ENCODE measurements at regions of chr7 and their contacts with region 1.

Region 1: GRCh38 chr7:584122-584465 is 64.4 kb upstream of the PDGFA start:
- DNase-seq: peak; percentile 69 to 95 (median 90)
- ATAC-seq: peak; percentile 98
- H3K4me3 ChIP-seq: peak overlapping the region; percentile 85
- H3K4me3 Mint-ChIP-seq: peak overlapping the region; percentile 85 to 96 (median 90)
- H3K27ac ChIP-seq: peak overlapping the region; percentile 78
- H3K27ac Mint-ChIP-seq: peak overlapping the region; percentile 93 to 98 (median 97)
- H3K4me1 ChIP-seq: peaks cover 15 to 17% of the 10 kb centered on the region in 2 donors
- H3K4me1 Mint-ChIP-seq: peaks cover 14 to 44% (median 35%) of the 10 kb centered on the region in 7 donors
- H3K27me3 ChIP-seq: no peaks in the 10 kb centered on the region
- H3K27me3 Mint-ChIP-seq: no peaks in the 10 kb centered on the region

Region 2: DNA sequence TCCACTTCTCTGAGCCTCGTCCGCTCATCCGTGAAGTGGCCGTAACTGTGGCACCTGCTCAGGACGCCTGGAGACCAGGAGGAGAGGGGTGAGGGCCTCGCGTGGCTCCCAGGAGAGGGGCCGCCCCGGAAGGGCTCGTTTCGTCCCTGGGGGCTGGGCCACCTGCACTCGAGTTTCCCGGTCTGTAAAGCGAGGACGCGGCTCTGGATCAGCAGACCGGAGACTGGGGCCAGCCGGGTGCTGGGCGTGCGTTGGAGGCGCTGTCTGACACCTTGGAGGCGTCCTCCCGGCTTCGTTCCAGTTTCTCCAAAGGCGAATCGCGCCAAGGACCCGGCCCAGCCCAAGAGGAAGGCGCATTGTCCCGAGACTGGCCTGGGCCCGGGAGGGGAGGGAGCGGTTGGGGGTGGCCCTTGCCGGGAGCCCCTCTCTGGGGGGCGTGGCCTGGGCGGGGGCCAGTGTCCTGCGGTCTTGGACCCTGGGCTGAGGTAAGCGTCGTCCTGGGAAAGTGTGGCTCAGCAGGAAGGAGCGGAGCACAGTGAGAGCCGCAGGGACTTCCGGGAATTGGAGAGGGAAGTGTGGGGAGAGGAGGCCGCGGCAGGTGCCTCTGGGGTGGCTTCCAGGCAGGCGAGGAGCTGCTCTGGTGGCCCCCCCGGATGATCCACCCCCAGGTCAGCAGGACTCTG is 204.5 kb before region 1 on chr7:
- CTCF ChIA-PET with region 1: no interaction called
- POLR2A ChIA-PET with region 1: no interaction called
- intact Hi-C with region 1: loop called in 1 of 2 experiments (anchors 1 kb)
- DNase-seq: peak in 3 of 9 donors; percentile 3 to 21 (median 10)
- ATAC-seq: no peak
- H3K4me3 ChIP-seq: peak overlapping the region; percentile 20
- H3K4me3 Mint-ChIP-seq: peak overlapping the region in 9 of 10 donors; percentile 18 to 84 (median 76)
- H3K27ac ChIP-seq: no peak overlapping the region
- H3K27ac Mint-ChIP-seq: peak overlapping the region in 3 of 9 donors; percentile 47 to 60 (median 55)
- H3K4me1 ChIP-seq: peaks cover 19 to 32% of the 10 kb centered on the region in 2 donors
- H3K4me1 Mint-ChIP-seq: peaks cover 17 to 37% (median 23%) of the 10 kb centered on the region in 7 donors
- H3K27me3 ChIP-seq: no peaks in the 10 kb centered on the region
- H3K27me3 Mint-ChIP-seq: peaks cover 0 to 28% (median 0%) of the 10 kb centered on the region in 5 donors

Region 3: GRCh38 chr7:604001-604883 is 20.1 kb after region 1 on chr7:
- CTCF ChIA-PET with region 1: no interaction called
- POLR2A ChIA-PET with region 1: interaction called, 9 read pairs
- intact Hi-C with region 1: loop called (anchors 1 kb)
- DNase-seq: peak; percentile 74 to 91 (median 87)
- ATAC-seq: peak; percentile 89
- H3K4me3 ChIP-seq: peak overlapping the region; percentile 26
- H3K4me3 Mint-ChIP-seq: peak overlapping the region; percentile 77 to 98 (median 88)
- H3K27ac ChIP-seq: peak overlapping the region; percentile 86
- H3K27ac Mint-ChIP-seq: peak overlapping the region; percentile 93 to 100 (median 99)
- H3K4me1 ChIP-seq: peaks cover 48 to 56% of the 10 kb centered on the region in 2 donors
- H3K4me1 Mint-ChIP-seq: peaks cover 37 to 72% (median 49%) of the 10 kb centered on the region in 7 donors
- H3K27me3 ChIP-seq: no peaks in the 10 kb centered on the region
- H3K27me3 Mint-ChIP-seq: no peaks in the 10 kb centered on the region

Region 4: GRCh38 chr7:641269-641671 is 57.2 kb after region 1 on chr7:
- CTCF ChIA-PET with region 1: no interaction called
- POLR2A ChIA-PET with region 1: no interaction called
- intact Hi-C with region 1: loop called in 1 of 2 experiments (anchors 2 kb)
- DNase-seq: no peak
- ATAC-seq: no peak
- H3K4me3 ChIP-seq: no peak overlapping the region
- H3K4me3 Mint-ChIP-seq: no peak overlapping the region
- H3K27ac ChIP-seq: no peak overlapping the region
- H3K27ac Mint-ChIP-seq: no peak overlapping the region
- H3K4me1 ChIP-seq: no peaks in the 10 kb centered on the region
- H3K4me1 Mint-ChIP-seq: peaks cover 9 to 33% (median 23%) of the 10 kb centered on the region in 7 donors
- H3K27me3 ChIP-seq: no peaks in the 10 kb centered on the region
- H3K27me3 Mint-ChIP-seq: no peaks in the 10 kb centered on the region

Region 5: DNA sequence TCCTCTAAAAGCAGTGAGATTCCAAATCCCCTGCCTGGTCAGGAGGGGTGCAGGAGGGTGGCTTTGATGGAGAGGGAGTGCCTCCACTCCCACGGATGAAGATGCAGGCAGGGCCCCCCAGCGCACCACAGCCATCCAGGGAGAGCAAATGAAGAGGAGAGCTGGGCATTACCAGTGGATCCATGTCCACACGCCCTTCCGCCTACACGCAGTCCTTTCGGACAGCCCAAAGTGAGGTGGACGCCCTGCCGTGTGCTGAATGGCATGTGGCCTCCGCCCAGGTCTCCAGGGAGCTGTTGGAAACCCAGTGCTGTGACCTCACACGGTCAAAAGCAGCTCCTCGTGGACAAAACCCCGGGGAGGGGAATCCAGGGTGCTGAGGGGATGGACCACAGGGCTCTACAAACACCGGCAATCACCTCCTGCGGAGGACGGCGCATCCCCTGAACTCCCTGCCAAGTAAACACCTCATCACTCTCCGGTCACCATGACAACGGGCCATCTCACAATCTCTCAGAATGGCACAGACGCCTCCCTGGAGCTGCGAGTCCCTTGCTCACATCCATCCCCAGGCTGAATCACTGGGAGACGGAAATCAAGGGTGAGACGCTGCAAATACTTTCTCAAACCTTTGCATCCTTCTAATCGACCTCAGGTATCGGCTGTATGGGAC is 107.4 kb after region 1 on chr7:
- CTCF ChIA-PET with region 1: no interaction called
- POLR2A ChIA-PET with region 1: no interaction called
- intact Hi-C with region 1: no loop called
- DNase-seq: no peak
- ATAC-seq: no peak
- H3K4me3 ChIP-seq: no peak overlapping the region
- H3K4me3 Mint-ChIP-seq: no peak overlapping the region
- H3K27ac ChIP-seq: no peak overlapping the region
- H3K27ac Mint-ChIP-seq: no peak overlapping the region
- H3K4me1 ChIP-seq: no peaks in the 10 kb centered on the region
- H3K4me1 Mint-ChIP-seq: peaks cover 0 to 15% (median 0%) of the 10 kb centered on the region in 7 donors
- H3K27me3 ChIP-seq: no peaks in the 10 kb centered on the region
- H3K27me3 Mint-ChIP-seq: no peaks in the 10 kb centered on the region

Region 6: GRCh38 chr7:712381-713138 is 128.5 kb after region 1 on chr7:
- CTCF ChIA-PET with region 1: no interaction called
- POLR2A ChIA-PET with region 1: no interaction called
- intact Hi-C with region 1: loop called in 1 of 2 experiments (anchors 1 kb)
- DNase-seq: peak in 4 of 9 donors; percentile 28 to 43 (median 42)
- ATAC-seq: peak; percentile 75
- H3K4me3 ChIP-seq: peak overlapping the region; percentile 24
- H3K4me3 Mint-ChIP-seq: peak overlapping the region in 9 of 10 donors; percentile 9 to 86 (median 68)
- H3K27ac ChIP-seq: peak overlapping the region; percentile 62
- H3K27ac Mint-ChIP-seq: peak overlapping the region in 6 of 9 donors; percentile 53 to 87 (median 82)
- H3K4me1 ChIP-seq: peaks cover 0 to 5% of the 10 kb centered on the region in 2 donors
- H3K4me1 Mint-ChIP-seq: peaks cover 5 to 34% (median 15%) of the 10 kb centered on the region in 7 donors
- H3K27me3 ChIP-seq: no peaks in the 10 kb centered on the region
- H3K27me3 Mint-ChIP-seq: peaks cover 0 to 5% (median 0%) of the 10 kb centered on the region in 5 donors

Region 7: GRCh38 chr7:816300-816750 is 232.2 kb after region 1 on chr7:
- CTCF ChIA-PET with region 1: no interaction called
- POLR2A ChIA-PET with region 1: no interaction called
- intact Hi-C with region 1: loop called in 1 of 2 experiments (anchors 1 kb)
- DNase-seq: peak; percentile 95 to 98 (median 97)
- ATAC-seq: peak; percentile 98
- H3K4me3 ChIP-seq: peak overlapping the region; percentile 52
- H3K4me3 Mint-ChIP-seq: peak overlapping the region; percentile 60 to 98 (median 88)
- H3K27ac ChIP-seq: peak overlapping the region; percentile 59
- H3K27ac Mint-ChIP-seq: peak overlapping the region in 3 of 9 donors; percentile 9 to 85 (median 65)
- H3K4me1 ChIP-seq: peaks cover 27 to 32% of the 10 kb centered on the region in 2 donors
- H3K4me1 Mint-ChIP-seq: peaks cover 45 to 72% (median 61%) of the 10 kb centered on the region in 7 donors
- H3K27me3 ChIP-seq: no peaks in the 10 kb centered on the region
- H3K27me3 Mint-ChIP-seq: peaks cover 0 to 42% (median 0%) of the 10 kb centered on the region in 5 donors

Measured in naive thymus-derived CD4-positive, alpha-beta T cell (primary cell).